ENCODE measurements at regions of chr14 and their contacts with region 1.

Region 1: DNA sequence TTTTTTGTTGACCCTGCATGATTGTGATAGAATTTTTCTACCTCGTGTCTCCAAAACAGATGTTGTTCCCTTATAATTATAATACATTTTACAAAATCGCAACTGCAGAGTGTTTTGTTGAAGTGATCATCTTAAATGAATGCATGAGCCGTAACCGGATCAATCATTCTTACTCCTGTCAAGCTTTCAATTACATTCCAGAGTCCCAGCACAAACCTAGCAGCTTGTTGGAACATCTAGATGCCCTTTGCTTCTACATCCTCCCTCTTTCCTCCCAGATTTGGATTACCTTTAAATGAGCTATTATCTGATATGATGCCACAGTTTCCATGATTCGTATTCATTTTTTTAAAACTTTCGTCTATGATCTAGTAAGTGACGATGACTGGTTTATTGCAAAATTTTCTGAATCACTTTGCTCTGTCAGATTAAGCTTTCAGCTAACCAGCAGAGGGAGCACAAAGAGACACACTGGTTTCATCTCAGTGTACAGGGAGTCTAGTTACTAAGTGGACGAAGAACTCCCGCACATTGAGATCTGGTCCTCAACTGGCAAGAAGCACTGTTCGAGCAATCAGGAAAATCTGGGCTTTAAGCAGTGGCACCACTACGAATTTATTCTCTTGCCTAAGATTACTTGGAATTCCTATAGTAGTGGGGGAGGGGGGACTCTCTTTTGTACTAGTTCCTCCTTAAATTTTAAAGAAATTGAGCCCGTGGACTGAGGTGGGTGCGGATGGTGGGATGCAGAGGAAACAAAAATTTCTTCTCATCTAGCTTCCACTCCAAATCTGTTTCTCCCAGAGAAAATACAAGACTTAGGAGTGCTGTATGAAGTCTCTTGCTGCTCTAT is 40.9 kb downstream of the TSHR start:
- DNase-seq: peak in 3 of 6 donors; percentile 18 to 40 (median 35)
- ATAC-seq: peak; percentile 73 to 97 (median 96)
- H3K4me3 ChIP-seq: no peak overlapping the region
- H3K27ac ChIP-seq: no peak overlapping the region
- H3K4me1 ChIP-seq: no peaks in the 10 kb centered on the region
- H3K27me3 ChIP-seq: no peaks in the 10 kb centered on the region
- CTCF ChIP-seq: peak in 3 of 4 donors; percentile 13 to 59 (median 55)

Region 2: DNA sequence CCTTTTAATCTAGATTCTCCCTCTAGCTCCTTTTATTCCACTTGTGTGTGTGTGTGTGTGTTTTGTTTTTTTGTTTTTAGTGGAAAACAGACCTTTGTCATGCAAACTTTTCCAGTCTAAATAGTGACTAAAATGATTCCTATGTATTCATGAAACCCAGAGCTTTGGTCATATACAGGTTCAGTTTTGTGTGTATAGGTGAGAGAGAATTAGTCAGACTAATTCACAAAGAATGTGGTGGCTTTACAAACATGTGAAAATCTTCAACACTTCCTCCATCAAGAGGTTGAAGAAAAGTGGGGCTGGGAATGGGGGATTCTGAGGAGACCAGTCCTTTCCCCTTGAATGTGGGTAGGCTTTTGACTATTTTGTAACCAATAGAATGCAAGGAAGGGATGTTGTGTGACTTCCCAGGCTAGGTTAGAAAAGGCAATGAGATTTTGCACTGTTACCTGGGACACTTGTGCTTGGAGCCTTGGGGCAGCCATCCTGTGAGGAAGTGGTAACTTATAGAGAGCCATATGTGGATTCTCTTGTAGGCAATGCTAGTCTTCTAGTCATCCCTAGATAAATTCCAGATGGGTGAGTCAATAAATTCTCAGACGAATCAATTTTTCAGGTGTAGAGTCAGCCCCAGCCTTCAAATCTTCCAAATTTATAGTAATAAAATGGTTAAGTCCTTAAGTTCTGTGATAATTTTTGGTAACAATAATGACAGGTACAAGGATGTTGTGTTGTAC is 290.9 kb before region 1 on chr14:
- intact Hi-C with region 1: no loop called
- DNase-seq: no peak
- ATAC-seq: no peak
- H3K4me3 ChIP-seq: no peak overlapping the region
- H3K27ac ChIP-seq: no peak overlapping the region
- H3K4me1 ChIP-seq: no peaks in the 10 kb centered on the region
- H3K27me3 ChIP-seq: no peaks in the 10 kb centered on the region
- CTCF ChIP-seq: no peak

Region 3: DNA sequence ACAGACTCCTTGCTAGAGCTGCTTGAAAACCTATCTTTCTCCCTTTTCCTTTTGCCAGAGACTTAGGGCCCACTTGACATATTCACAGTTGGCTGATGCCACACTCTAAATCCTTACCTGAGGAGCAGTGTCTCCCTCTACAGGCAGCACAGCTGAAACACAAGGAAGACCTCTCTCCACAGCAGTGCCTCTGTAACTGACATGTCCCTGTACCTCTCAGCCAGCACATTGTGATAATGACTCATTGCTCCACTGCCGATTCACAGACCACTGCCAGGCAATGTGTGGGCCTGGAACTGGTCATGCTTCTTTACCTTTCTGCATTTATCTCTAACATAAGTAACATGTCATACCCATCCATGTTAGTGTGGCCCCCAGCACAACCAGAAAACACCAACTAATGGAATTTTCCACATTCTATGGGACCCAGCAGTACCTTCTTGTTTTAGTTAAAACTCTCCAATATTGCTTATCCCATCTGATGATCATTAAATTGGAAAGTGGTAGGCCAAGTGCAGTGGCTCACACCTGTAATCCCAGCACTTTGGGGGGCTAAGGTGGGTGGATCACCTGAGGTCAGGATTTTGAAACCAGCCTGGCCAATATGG is 168.0 kb after region 1 on chr14:
- intact Hi-C with region 1: loop called in 1 of 3 experiments (anchors 10 kb)
- DNase-seq: peak in 4 of 6 donors; percentile 37 to 77 (median 44)
- ATAC-seq: peak; percentile 91 to 98 (median 96)
- H3K4me3 ChIP-seq: no peak overlapping the region
- H3K27ac ChIP-seq: no peak overlapping the region
- H3K4me1 ChIP-seq: peaks cover 0 to 6% (median 3%) of the 10 kb centered on the region in 3 donors
- H3K27me3 ChIP-seq: no peaks in the 10 kb centered on the region
- CTCF ChIP-seq: peak in 3 of 4 donors; percentile 22 to 45 (median 43)

Region 4: DNA sequence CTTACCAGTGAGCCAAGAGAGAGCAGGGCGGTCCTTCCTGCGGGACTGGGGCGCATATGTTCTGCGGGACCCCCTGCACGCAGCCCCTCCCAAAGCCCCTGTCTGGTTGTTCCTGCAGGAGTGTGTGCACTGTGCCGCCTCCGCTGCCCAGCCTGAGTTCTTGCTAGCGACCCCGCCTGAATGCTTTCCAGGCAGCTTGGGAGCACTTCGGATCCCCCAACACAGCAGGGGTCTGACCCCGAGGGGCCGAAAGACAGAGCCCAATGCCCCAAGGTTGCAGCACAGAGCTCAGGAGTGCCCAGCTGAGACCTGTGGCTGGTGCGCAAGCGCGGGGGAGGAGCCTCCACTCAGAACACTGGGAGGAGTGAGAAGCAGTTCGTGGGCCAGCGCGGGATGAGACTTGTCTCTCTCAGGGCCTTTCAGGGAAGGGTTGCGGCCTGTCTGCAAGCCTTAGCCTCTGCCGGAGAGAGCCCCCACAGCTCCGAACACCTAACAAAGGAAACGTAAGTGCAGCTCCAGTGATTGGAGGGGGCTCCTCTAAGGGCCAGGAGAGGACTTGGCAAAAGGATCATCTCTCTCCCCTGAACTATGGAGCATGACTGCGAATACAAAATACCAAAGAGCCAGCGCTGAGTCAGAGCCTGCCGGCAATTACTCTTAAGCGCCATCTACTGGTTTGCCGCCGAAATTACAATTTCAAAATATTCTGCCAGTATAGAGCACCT is 174.0 kb after region 1 on chr14:
- intact Hi-C with region 1: loop called in 2 of 3 experiments (anchors 5 to 10 kb)
- DNase-seq: peak; percentile 88 to 97 (median 90)
- ATAC-seq: peak; percentile 98 to 99 (median 98)
- H3K4me3 ChIP-seq: peak overlapping the region; percentile 50 to 69 (median 61)
- H3K27ac ChIP-seq: peak overlapping the region; percentile 76 to 94 (median 86)
- H3K4me1 ChIP-seq: peaks cover 0 to 6% (median 6%) of the 10 kb centered on the region in 3 donors
- H3K27me3 ChIP-seq: no peaks in the 10 kb centered on the region
- CTCF ChIP-seq: peak; percentile 76 to 80 (median 78)

Region 5: DNA sequence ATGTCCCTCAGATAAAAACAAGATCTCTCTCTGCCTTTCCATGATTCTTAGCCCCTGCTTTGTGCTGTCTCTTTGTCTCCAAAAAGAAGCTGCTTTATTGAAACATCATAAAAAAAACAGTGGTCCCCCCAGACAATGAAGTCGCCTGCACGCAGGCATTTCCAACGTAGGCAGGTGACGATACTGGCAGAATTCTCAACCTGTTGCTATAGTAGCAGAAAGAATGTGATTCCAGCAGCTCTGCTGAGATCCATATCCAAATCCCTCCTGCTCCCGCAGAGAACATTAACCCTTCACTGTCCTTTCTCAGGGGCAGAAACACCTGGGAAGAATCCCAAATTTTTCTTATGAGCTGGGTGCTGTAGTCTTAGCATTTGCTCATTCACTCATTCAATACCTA is 319.1 kb after region 1 on chr14:
- intact Hi-C with region 1: no loop called
- DNase-seq: no peak
- ATAC-seq: peak in 3 of 4 donors; percentile 43 to 73 (median 61)
- H3K4me3 ChIP-seq: no peak overlapping the region
- H3K27ac ChIP-seq: no peak overlapping the region
- H3K4me1 ChIP-seq: no peaks in the 10 kb centered on the region
- H3K27me3 ChIP-seq: no peaks in the 10 kb centered on the region
- CTCF ChIP-seq: no peak

Region 6: DNA sequence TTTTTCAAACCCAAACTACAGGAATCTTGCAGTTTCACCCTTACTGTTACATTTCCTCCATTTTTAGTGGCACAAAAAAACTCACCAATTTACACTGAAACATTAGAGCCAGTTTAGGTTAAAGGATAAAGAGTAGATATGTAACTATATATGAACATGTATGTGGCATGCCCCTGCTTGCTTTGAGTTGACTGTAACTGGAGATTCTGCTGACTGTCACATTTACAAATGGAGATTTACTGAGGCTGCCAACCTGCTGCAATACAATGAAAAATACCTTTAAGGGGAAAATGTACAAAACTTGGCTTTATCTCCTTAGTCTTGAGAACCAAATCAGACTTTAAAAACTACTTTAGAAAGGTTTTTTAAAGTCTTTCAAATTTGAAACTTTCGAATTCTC is 375.5 kb after region 1 on chr14:
- intact Hi-C with region 1: no loop called
- DNase-seq: no peak
- ATAC-seq: no peak
- H3K4me3 ChIP-seq: no peak overlapping the region
- H3K27ac ChIP-seq: no peak overlapping the region
- H3K4me1 ChIP-seq: no peaks in the 10 kb centered on the region
- H3K27me3 ChIP-seq: no peaks in the 10 kb centered on the region
- CTCF ChIP-seq: no peak

Region 7: DNA sequence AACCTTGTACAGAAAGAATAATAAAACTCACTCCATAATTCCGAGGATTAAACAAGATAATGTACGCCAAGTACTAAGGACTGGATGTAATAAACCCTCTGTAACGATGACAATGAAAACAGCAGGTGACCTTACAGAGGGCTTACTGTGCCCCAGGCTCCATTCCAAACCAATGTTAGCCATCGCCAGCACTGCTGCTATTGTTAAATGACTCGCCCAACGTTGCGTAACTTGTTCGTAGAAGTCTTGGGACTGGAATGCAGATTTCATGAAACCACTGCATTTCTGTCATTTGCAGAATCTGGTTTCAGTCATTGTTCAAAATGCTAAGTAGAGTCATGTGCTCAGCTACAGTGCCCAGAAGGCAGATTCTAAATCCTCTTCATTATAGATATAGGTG is 404.6 kb after region 1 on chr14:
- intact Hi-C with region 1: no loop called
- DNase-seq: peak in 2 of 6 donors; percentile 21 to 41
- ATAC-seq: peak in 3 of 4 donors; percentile 46 to 79 (median 65)
- H3K4me3 ChIP-seq: no peak overlapping the region
- H3K27ac ChIP-seq: no peak overlapping the region
- H3K4me1 ChIP-seq: no peaks in the 10 kb centered on the region
- H3K27me3 ChIP-seq: no peaks in the 10 kb centered on the region
- CTCF ChIP-seq: no peak

Measured in pancreas (tissue), 10 donors.